Activated B cell treated with CpG ODN at 0.5 μM for 24 hours (primary cell): ENCODE measurements at regions of chr1 and their contacts with region 1.

Region 1: GRCh38 chr1:171741872-171742576 is at the start of gene VAMP4:
- DNase-seq: peak; percentile 82
- ATAC-seq: peak; percentile 93
- H3K4me3 Mint-ChIP-seq: peak within 1 kb of the TSS; percentile 100
- H3K27ac Mint-ChIP-seq: peak within 1 kb of the TSS; percentile 100
- H3K4me1 Mint-ChIP-seq: peaks cover 37% of the 10 kb centered on the region
- H3K27me3 Mint-ChIP-seq: no peaks in the 10 kb centered on the region
- CTCF ChIP-seq: no peak
- total RNA-seq, gene VAMP4: 9.0 and 10.5 TPM in 2 replicates

Region 2: DNA sequence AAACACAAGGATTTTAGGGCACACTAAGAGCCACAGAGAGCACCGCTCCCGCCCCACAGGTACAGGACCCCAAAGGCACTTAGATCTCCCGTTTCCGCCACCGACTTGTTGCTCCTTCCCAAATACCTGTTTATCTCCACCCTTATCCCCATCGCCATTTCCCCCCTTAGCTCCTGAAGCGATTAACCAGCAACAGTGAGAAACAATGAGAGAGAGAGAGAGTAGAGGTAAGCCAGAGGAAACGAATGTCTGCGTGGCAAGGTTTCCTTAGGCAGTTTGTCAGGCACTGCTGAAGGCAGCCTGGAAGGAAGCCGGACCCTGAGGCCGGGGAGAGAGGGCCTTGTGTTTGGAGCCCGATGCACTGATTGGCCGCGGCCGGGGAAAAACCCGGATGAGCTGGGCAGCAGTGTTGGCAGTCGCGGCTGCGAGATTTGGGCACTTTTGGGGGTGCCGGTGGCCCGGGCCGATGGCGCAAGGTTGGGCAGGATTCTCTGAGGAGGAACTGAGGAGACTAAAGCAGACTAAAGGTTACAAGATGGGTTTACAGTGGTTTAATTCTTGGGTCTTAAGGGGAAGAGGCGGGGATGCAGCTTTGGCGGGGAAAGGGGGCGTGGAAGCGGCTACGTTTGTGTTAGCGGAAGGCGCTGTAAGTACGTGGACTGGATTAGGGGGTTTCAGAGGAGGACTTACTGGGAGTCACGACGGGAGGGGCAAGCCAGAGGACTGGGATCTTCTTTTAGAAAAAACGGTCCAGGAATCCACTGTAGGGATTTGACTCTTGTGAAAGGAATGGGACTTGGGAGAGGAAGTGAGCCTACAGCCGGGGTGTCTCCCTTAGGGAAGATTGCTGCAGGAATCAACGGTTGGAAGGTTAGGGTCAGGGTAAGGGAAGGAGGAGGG is 1210.0 kb before region 1 on chr1 and contains the start of gene GORAB:
- CTCF ChIA-PET with region 1: no interaction called
- POLR2A ChIA-PET with region 1: no interaction called
- intact Hi-C with region 1: loop called (anchors 10 kb)
- DNase-seq: peak; percentile 77
- ATAC-seq: peak; percentile 98
- H3K4me3 Mint-ChIP-seq: no peak within 1 kb of the TSS
- H3K27ac Mint-ChIP-seq: no peak within 1 kb of the TSS
- H3K4me1 Mint-ChIP-seq: peaks cover 13% of the 10 kb centered on the region
- H3K27me3 Mint-ChIP-seq: peaks cover 4% of the 10 kb centered on the region
- CTCF ChIP-seq: no peak
- total RNA-seq, gene GORAB: 20.0 and 20.2 TPM in 2 replicates

Region 3: DNA sequence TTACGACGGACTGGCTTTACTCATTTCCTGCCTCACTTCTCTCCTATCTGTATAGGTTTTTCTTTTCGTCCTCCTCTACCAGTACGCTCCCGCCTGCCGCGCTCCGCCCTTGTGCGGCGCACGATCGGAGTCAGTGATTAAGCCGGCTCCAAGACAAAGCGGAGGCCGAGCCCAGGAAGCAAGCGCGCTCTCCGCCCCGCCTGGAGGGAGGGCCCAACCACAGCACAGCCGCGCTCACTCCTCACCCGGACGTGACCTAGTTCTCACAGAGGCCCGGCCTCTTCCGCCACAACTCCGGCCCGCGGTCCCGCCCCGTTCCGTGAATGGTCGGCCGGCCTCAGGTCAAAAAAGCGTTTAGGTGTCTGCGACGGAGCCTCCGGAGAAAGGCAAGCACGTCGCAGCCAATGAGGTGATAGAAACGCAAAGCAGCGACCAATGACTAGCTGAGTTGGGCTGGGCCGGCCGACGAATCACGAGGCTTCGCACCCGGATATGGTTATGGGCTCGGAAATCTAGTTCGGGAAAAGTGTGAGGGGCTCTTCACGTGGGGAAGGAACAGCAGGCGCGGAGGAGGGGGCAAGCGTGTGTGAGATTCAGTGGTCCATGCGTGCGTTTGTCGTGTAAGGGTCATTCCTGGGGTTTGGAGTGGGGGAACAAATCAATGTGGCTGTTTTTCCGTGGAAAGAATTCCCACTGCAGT is 39.3 kb after region 1 on chr1 and contains the start of gene METTL13:
- CTCF ChIA-PET with region 1: interaction called, 3 read pairs
- POLR2A ChIA-PET with region 1: interaction called, 86 read pairs
- intact Hi-C with region 1: loop called (anchors 1 kb)
- DNase-seq: peak; percentile 91
- ATAC-seq: peak; percentile 94
- H3K4me3 Mint-ChIP-seq: peak within 1 kb of the TSS; percentile 99
- H3K27ac Mint-ChIP-seq: peak within 1 kb of the TSS; percentile 94
- H3K4me1 Mint-ChIP-seq: peaks cover 43% of the 10 kb centered on the region
- H3K27me3 Mint-ChIP-seq: peaks cover 6% of the 10 kb centered on the region
- CTCF ChIP-seq: no peak
- total RNA-seq, gene METTL13: 33.6 and 35.7 TPM in 2 replicates

Region 4: GRCh38 chr1:171841050-171841940 is 99.3 kb after region 1 on chr1 and contains the start of gene DNM3:
- CTCF ChIA-PET with region 1: no interaction called
- POLR2A ChIA-PET with region 1: interaction called, 3 read pairs
- intact Hi-C with region 1: loop called (anchors 1 kb)
- DNase-seq: peak; percentile 91
- ATAC-seq: peak; percentile 94
- H3K4me3 Mint-ChIP-seq: peak within 1 kb of the TSS; percentile 85
- H3K27ac Mint-ChIP-seq: peak within 1 kb of the TSS; percentile 36
- H3K4me1 Mint-ChIP-seq: peaks cover 18% of the 10 kb centered on the region
- H3K27me3 Mint-ChIP-seq: peaks cover 20% of the 10 kb centered on the region
- CTCF ChIP-seq: no peak
- total RNA-seq, gene DNM3: 1.9 and 2.1 TPM in 2 replicates

Region 5: DNA sequence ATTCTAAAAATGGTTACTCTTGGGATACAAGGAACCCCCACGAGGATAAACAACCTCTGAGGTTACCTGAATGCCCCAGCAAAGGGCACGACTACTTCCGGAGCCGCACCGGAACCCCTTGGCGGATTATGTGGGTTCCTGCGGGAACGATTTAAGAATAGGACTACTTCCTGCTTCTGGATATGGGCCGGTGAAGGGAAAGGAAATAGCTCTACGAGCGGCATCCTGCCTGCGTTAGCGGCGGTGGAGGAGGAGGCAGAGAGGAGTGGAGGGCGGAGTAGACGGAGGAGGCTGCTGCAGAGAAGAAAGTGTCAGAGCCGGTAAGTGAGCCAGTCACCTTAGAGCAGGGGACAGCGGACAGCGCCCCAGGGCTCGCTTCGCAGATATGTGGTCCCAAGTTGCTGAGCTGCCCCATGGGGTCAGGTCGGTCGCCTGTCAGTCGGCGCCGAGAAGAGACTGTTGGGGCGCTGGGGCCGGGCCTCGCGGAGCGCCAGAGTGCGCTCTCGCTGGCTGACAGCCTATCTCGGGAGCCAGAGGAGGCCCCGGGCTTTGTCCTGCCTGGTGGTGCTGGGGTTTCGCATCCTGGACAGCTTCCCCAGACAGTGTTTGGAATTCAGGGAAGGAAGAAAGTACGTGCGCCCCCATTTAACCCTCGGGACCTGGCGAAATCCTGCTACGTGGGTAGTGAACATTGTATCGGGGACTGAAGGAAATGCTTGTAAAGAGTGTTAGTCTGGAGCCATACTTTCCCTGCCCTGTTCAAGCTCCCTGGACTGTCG is 1972.9 kb after region 1 on chr1 and contains the start of gene KLHL20:
- CTCF ChIA-PET with region 1: no interaction called
- POLR2A ChIA-PET with region 1: no interaction called
- intact Hi-C with region 1: loop called (anchors 10 kb)
- DNase-seq: peak; percentile 71
- ATAC-seq: peak; percentile 96
- H3K4me3 Mint-ChIP-seq: peak within 1 kb of the TSS; percentile 93
- H3K27ac Mint-ChIP-seq: peak within 1 kb of the TSS; percentile 89
- H3K4me1 Mint-ChIP-seq: peaks cover 22% of the 10 kb centered on the region
- H3K27me3 Mint-ChIP-seq: peaks cover 14% of the 10 kb centered on the region
- CTCF ChIP-seq: no peak
- total RNA-seq, gene KLHL20: 19.6 and 26.1 TPM in 2 replicates